ENCODE measurements at regions of chr3 and their contacts with region 1.

Region 1: DNA sequence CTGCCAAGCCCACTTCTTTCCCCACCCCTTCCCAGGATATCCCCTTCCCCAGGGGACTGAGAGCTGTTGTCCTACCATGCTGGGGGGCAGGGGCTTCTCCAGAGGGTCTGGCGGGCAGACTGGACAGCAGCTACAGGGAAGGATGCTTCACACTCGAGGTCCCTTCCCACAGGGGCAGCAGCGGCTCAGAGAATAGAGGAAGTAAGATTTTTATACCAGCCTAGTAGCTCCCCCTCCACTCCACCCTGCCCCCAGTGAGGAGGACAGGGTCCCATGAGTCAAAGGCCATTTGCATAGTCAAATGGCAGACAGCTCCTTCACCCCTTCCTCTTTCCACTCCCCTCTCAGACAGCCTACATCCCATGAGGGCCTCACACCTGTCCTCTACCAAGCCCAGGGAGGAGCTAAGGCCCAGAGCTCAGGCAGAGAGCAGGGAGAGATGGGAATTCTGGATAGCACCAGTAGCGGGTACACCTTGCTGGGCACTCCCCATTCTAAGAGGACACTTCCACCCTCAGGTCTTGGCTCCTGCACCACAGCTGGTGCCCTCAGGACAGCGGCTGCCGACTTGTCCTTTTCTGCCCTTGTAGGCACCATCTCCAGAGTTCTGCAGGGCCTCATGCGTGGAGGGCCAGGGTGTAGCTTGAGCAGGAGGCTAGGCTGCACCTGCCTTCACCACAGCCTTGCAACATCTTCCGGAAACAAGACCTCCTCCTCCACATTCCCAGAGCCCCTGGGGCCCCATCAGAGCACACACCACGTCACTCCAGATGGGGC is at the start of gene TLR9:
- DNase-seq: peak; percentile 94
- ATAC-seq: peak; percentile 89
- H3K4me3 ChIP-seq: peak within 1 kb of the TSS; percentile 39 to 90 (median 66)
- H3K4me3 Mint-ChIP-seq: peak within 1 kb of the TSS; percentile 94
- H3K27ac ChIP-seq: peak within 1 kb of the TSS; percentile 78 to 88
- H3K27ac Mint-ChIP-seq: peak within 1 kb of the TSS; percentile 99
- H3K4me1 ChIP-seq: peaks cover 46 to 69% of the 10 kb centered on the region in 2 donors
- H3K4me1 Mint-ChIP-seq: peaks cover 69% of the 10 kb centered on the region
- H3K27me3 ChIP-seq: no peaks in the 10 kb centered on the region
- H3K27me3 Mint-ChIP-seq: no peaks in the 10 kb centered on the region
- CTCF ChIP-seq: no peak
- total RNA-seq, gene TLR9: 16.0 and 21.0 TPM in 2 replicates

Region 2: GRCh38 chr3:51988286-51989146 is 237.1 kb before region 1 on chr3:
- CTCF ChIA-PET with region 1: no interaction called
- POLR2A ChIA-PET with region 1: no interaction called
- intact Hi-C with region 1: no loop called
- DNase-seq: no peak
- ATAC-seq: no peak
- H3K4me3 ChIP-seq: no peak overlapping the region
- H3K4me3 Mint-ChIP-seq: no peak overlapping the region
- H3K27ac ChIP-seq: no peak overlapping the region
- H3K27ac Mint-ChIP-seq: peak overlapping the region; percentile 6
- H3K4me1 ChIP-seq: peaks cover 0 to 5% of the 10 kb centered on the region in 2 donors
- H3K4me1 Mint-ChIP-seq: peaks cover 17% of the 10 kb centered on the region
- H3K27me3 ChIP-seq: no peaks in the 10 kb centered on the region
- H3K27me3 Mint-ChIP-seq: no peaks in the 10 kb centered on the region
- CTCF ChIP-seq: no peak

Region 3: GRCh38 chr3:52154117-52155094 is 71.2 kb before region 1 on chr3 and contains the start of gene POC1A:
- CTCF ChIA-PET with region 1: interaction called, 3 read pairs
- POLR2A ChIA-PET with region 1: interaction called, 9 read pairs
- intact Hi-C with region 1: loop called (anchors 1 kb)
- DNase-seq: peak; percentile 91
- ATAC-seq: peak; percentile 85
- H3K4me3 ChIP-seq: peak within 1 kb of the TSS; percentile 73 to 93 (median 92)
- H3K4me3 Mint-ChIP-seq: peak within 1 kb of the TSS; percentile 98
- H3K27ac ChIP-seq: peak within 1 kb of the TSS; percentile 79 to 81
- H3K27ac Mint-ChIP-seq: peak within 1 kb of the TSS; percentile 98
- H3K4me1 ChIP-seq: peaks cover 4 to 15% of the 10 kb centered on the region in 2 donors
- H3K4me1 Mint-ChIP-seq: peaks cover 14% of the 10 kb centered on the region
- H3K27me3 ChIP-seq: no peaks in the 10 kb centered on the region
- H3K27me3 Mint-ChIP-seq: no peaks in the 10 kb centered on the region
- CTCF ChIP-seq: peak; percentile 13
- total RNA-seq, gene POC1A: 2.4 and 2.8 TPM in 2 replicates

Region 4: GRCh38 chr3:52190294-52191074 is 35.2 kb before region 1 on chr3:
- CTCF ChIA-PET with region 1: no interaction called
- POLR2A ChIA-PET with region 1: no interaction called
- intact Hi-C with region 1: no loop called
- DNase-seq: no peak
- ATAC-seq: no peak
- H3K4me3 ChIP-seq: no peak overlapping the region
- H3K4me3 Mint-ChIP-seq: no peak overlapping the region
- H3K27ac ChIP-seq: no peak overlapping the region
- H3K27ac Mint-ChIP-seq: no peak overlapping the region
- H3K4me1 ChIP-seq: peaks cover 0 to 6% of the 10 kb centered on the region in 2 donors
- H3K4me1 Mint-ChIP-seq: peaks cover 6% of the 10 kb centered on the region
- H3K27me3 ChIP-seq: no peaks in the 10 kb centered on the region
- H3K27me3 Mint-ChIP-seq: no peaks in the 10 kb centered on the region
- CTCF ChIP-seq: no peak

Region 5: DNA sequence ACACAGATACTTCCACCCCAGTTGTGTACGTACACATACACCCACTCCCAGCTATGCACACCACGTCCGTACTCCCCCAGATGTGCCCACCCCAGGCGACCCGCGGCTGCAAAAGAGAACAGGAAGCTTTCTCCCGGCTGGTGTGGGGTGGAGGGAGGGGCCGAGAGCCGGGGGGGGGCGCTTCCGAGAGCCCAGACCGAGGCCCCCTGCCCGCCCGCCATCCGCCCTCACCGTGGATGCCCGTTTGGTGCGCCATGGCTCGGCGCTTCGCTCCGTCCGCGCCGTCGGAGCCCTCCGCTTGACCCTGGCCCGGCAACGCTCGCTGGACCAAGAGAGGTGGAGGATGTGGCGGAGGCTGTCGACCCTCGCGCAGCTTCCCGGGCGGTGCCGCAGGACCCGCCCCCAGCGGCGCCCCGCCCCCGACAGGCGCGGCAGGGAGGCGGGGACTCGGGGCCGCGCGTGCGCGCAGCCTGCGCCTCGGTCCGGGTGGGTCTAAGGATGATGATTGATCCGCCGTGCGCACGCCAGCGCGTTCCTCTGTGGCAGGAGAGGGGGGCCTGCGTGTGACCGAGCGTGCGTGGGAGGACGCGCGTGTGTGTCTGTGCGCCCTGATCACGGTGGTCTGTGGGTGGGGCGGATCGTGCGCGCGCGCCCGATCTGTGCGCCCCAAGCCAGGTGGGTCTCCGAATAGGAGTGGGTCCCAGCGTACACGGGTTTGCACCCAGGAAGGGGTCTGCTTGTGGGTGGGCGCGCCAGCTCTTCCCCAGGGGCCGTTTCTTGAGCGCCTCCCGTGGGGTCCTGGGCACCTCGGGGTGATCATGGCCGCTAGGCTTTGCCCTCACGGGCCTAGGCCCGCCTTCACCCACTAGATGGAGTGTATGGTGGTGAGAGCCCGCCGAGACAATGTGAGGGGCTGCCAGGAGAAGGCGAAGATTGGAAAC is 13.4 kb after region 1 on chr3 and contains the start of gene TWF2:
- CTCF ChIA-PET with region 1: interaction called, 237 read pairs
- POLR2A ChIA-PET with region 1: interaction called, 28 read pairs
- intact Hi-C with region 1: loop called (anchors 1 kb)
- DNase-seq: peak; percentile 92
- ATAC-seq: peak; percentile 90
- H3K4me3 ChIP-seq: peak within 1 kb of the TSS; percentile 75 to 99 (median 93)
- H3K4me3 Mint-ChIP-seq: peak within 1 kb of the TSS; percentile 99
- H3K27ac ChIP-seq: peak within 1 kb of the TSS; percentile 53 to 63
- H3K27ac Mint-ChIP-seq: peak within 1 kb of the TSS; percentile 93
- H3K4me1 ChIP-seq: peaks cover 41 to 56% of the 10 kb centered on the region in 2 donors
- H3K4me1 Mint-ChIP-seq: peaks cover 61% of the 10 kb centered on the region
- H3K27me3 ChIP-seq: no peaks in the 10 kb centered on the region
- H3K27me3 Mint-ChIP-seq: no peaks in the 10 kb centered on the region
- CTCF ChIP-seq: peak; percentile 68
- total RNA-seq, gene TWF2: 53.5 and 60.3 TPM in 2 replicates

Region 6: GRCh38 chr3:52253314-52254304 is 28.0 kb after region 1 on chr3:
- CTCF ChIA-PET with region 1: interaction called, 33 read pairs
- POLR2A ChIA-PET with region 1: interaction called, 18 read pairs
- intact Hi-C with region 1: loop called (anchors 2 kb)
- DNase-seq: peak; percentile 92
- ATAC-seq: peak; percentile 96
- H3K4me3 ChIP-seq: peak overlapping the region in 2 of 5 experiments; percentile 25 to 35
- H3K4me3 Mint-ChIP-seq: peak overlapping the region; percentile 78
- H3K27ac ChIP-seq: peak overlapping the region; percentile 72 to 89
- H3K27ac Mint-ChIP-seq: peak overlapping the region; percentile 94
- H3K4me1 ChIP-seq: peaks cover 22 to 29% of the 10 kb centered on the region in 2 donors
- H3K4me1 Mint-ChIP-seq: peaks cover 39% of the 10 kb centered on the region
- H3K27me3 ChIP-seq: no peaks in the 10 kb centered on the region
- H3K27me3 Mint-ChIP-seq: no peaks in the 10 kb centered on the region
- CTCF ChIP-seq: no peak

Region 7: GRCh38 chr3:52313774-52314188 is 88.1 kb after region 1 on chr3:
- CTCF ChIA-PET with region 1: interaction called, 6 read pairs
- POLR2A ChIA-PET with region 1: interaction called, 4 read pairs
- intact Hi-C with region 1: loop called (anchors 1 kb)
- DNase-seq: peak; percentile 79
- ATAC-seq: peak; percentile 68
- H3K4me3 ChIP-seq: no peak overlapping the region
- H3K4me3 Mint-ChIP-seq: peak overlapping the region; percentile 76
- H3K27ac ChIP-seq: peak overlapping the region; percentile 65 to 82
- H3K27ac Mint-ChIP-seq: peak overlapping the region; percentile 94
- H3K4me1 ChIP-seq: peaks cover 36 to 61% of the 10 kb centered on the region in 2 donors
- H3K4me1 Mint-ChIP-seq: peaks cover 66% of the 10 kb centered on the region
- H3K27me3 ChIP-seq: no peaks in the 10 kb centered on the region
- H3K27me3 Mint-ChIP-seq: no peaks in the 10 kb centered on the region
- CTCF ChIP-seq: no peak